B cell (primary cell): ENCODE measurements at regions of chr22 and their contacts with region 1.

Region 1: GRCh38 chr22:32005453-32005852 is 37.6 kb upstream of the SLC5A1 start:
- DNase-seq: no peak
- ATAC-seq: no peak
- H3K4me3 ChIP-seq: no peak overlapping the region
- H3K4me3 Mint-ChIP-seq: no peak overlapping the region
- H3K27ac ChIP-seq: no peak overlapping the region
- H3K27ac Mint-ChIP-seq: no peak overlapping the region
- H3K4me1 ChIP-seq: no peaks in the 10 kb centered on the region
- H3K4me1 Mint-ChIP-seq: no peaks in the 10 kb centered on the region
- H3K27me3 ChIP-seq: peaks cover 0 to 3% (median 0%) of the 10 kb centered on the region in 4 experiments
- H3K27me3 Mint-ChIP-seq: peaks cover 22% of the 10 kb centered on the region
- CTCF ChIP-seq: no peak

Region 2: GRCh38 chr22:32058656-32059260 is 53.3 kb after region 1 on chr22:
- CTCF ChIA-PET with region 1: interaction called, 10 read pairs
- POLR2A ChIA-PET with region 1: no interaction called
- intact Hi-C with region 1: no loop called
- DNase-seq: no peak
- ATAC-seq: no peak
- H3K4me3 ChIP-seq: no peak overlapping the region
- H3K4me3 Mint-ChIP-seq: no peak overlapping the region
- H3K27ac ChIP-seq: no peak overlapping the region
- H3K27ac Mint-ChIP-seq: no peak overlapping the region
- H3K4me1 ChIP-seq: no peaks in the 10 kb centered on the region
- H3K4me1 Mint-ChIP-seq: no peaks in the 10 kb centered on the region
- H3K27me3 ChIP-seq: peaks cover 0 to 2% (median 0%) of the 10 kb centered on the region in 4 experiments
- H3K27me3 Mint-ChIP-seq: peaks cover 27% of the 10 kb centered on the region
- CTCF ChIP-seq: no peak